ENCODE measurements at regions of chr9 and their contacts with region 1.

Region 1: GRCh38 chr9:112507001-112507680 is 20.5 kb downstream of the KIAA1958 start:
- DNase-seq: no peak
- H3K4me3 ChIP-seq: no peak overlapping the region
- H3K27ac ChIP-seq: peak overlapping the region in 1 of 2 donors; percentile 31
- H3K4me1 ChIP-seq: peaks cover 19% of the 10 kb centered on the region
- H3K27me3 ChIP-seq: no peaks in the 10 kb centered on the region
- CTCF ChIP-seq: no peak
- EP300 ChIP-seq: no peak
- POLR2A ChIP-seq: no peak

Region 2: DNA sequence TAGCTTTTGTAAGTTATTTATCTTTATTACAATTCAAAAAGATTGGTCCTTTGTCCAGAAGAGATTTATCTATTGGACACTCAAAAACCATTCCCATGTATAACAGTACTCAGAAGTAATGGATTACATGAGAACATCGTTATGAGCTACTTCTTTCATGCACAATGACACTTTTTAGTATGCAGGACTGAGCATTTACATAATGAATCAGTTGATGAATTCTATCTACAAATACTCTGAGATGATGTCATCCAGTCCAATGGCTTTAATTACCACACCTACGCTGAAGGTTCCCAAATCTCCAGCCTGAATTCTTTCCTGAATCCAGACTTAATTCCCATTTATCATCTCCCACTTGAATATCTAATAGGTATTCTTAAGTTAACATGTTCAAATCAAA is 249.0 kb before region 1 on chr9:
- intact Hi-C with region 1: no loop called
- DNase-seq: no peak
- H3K4me3 ChIP-seq: no peak overlapping the region
- H3K27ac ChIP-seq: no peak overlapping the region
- H3K4me1 ChIP-seq: no peaks in the 10 kb centered on the region
- H3K27me3 ChIP-seq: no peaks in the 10 kb centered on the region
- CTCF ChIP-seq: no peak
- EP300 ChIP-seq: no peak
- POLR2A ChIP-seq: no peak

Region 3: GRCh38 chr9:112496074-112496722 is 10.9 kb before region 1 on chr9:
- intact Hi-C with region 1: loop called in 1 of 4 experiments (anchors 1 kb)
- DNase-seq: no peak
- H3K4me3 ChIP-seq: no peak overlapping the region
- H3K27ac ChIP-seq: peak overlapping the region in 1 of 2 donors; percentile 71
- H3K4me1 ChIP-seq: peaks cover 13% of the 10 kb centered on the region
- H3K27me3 ChIP-seq: no peaks in the 10 kb centered on the region
- CTCF ChIP-seq: no peak
- EP300 ChIP-seq: no peak
- POLR2A ChIP-seq: no peak